Left lung (tissue), 14 donors: ENCODE measurements at regions of chr3 and their contacts with region 1.

Region 1: DNA sequence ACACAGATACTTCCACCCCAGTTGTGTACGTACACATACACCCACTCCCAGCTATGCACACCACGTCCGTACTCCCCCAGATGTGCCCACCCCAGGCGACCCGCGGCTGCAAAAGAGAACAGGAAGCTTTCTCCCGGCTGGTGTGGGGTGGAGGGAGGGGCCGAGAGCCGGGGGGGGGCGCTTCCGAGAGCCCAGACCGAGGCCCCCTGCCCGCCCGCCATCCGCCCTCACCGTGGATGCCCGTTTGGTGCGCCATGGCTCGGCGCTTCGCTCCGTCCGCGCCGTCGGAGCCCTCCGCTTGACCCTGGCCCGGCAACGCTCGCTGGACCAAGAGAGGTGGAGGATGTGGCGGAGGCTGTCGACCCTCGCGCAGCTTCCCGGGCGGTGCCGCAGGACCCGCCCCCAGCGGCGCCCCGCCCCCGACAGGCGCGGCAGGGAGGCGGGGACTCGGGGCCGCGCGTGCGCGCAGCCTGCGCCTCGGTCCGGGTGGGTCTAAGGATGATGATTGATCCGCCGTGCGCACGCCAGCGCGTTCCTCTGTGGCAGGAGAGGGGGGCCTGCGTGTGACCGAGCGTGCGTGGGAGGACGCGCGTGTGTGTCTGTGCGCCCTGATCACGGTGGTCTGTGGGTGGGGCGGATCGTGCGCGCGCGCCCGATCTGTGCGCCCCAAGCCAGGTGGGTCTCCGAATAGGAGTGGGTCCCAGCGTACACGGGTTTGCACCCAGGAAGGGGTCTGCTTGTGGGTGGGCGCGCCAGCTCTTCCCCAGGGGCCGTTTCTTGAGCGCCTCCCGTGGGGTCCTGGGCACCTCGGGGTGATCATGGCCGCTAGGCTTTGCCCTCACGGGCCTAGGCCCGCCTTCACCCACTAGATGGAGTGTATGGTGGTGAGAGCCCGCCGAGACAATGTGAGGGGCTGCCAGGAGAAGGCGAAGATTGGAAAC is at the start of gene TWF2:
- DNase-seq: peak; percentile 82 to 94 (median 86)
- ATAC-seq: peak; percentile 92
- H3K4me3 ChIP-seq: peak within 1 kb of the TSS; percentile 92 to 94
- H3K27ac ChIP-seq: peak within 1 kb of the TSS; percentile 87 to 90
- H3K4me1 ChIP-seq: peaks cover 29 to 74% of the 10 kb centered on the region in 2 donors
- H3K27me3 ChIP-seq: no peaks in the 10 kb centered on the region
- CTCF ChIP-seq: peak; percentile 27 to 35
- polyA plus RNA-seq, gene TWF2: 28.9 to 37.7 (median 30.9) TPM

Region 2: DNA sequence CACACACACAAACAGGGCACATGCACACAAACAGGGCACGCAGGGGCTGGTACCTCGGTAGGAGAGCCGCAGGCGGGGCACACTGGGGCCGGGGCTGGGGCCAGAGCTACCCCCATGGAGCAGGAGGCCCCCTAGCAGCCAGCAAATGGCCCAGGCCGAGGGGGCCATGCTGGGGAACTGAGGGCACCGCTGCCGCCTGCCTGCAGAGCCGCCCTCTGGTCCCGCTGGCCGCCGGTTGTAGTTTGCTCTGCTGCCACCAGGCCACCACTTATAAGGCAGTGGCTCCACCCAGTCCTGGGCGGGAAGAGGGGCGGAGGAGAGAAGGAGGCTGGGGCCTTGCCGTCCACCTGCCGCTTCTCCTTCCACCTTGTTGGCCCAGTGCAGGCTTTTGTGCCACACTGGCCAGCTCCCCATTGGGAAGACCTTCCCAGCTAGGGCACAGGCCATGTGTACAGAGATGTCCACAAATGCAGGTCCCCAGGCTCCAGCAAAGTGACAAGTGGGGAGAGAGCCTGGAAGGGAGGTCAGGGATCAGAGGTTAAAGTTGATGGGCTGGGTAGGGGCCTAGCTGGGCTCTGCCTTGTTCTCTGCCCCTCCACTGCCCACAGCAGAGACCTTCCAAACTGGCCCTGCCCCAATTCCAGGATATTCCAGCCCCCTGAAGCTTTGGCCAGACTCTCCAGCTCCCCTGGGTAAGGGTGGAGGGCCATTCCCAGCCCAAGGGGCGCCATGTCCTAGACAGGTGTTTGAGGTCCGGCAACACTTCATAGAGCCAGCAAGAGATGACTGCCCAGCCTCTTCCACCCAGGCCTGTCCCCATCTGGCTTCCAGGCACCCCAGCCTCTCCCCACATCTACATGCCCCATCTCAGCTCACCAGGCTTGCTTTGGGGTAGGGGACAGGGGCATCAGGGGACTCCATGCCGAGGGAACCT is 206.1 kb after region 1 on chr3 and contains the start of gene SEMA3G:
- intact Hi-C with region 1: loop called in 1 of 2 experiments (anchors 10 kb)
- DNase-seq: peak in 3 of 4 donors; percentile 57 to 93 (median 79)
- ATAC-seq: peak; percentile 87
- H3K4me3 ChIP-seq: peak within 1 kb of the TSS; percentile 5 to 36
- H3K27ac ChIP-seq: no peak within 1 kb of the TSS
- H3K4me1 ChIP-seq: peaks cover 0 to 26% of the 10 kb centered on the region in 2 donors
- H3K27me3 ChIP-seq: no peaks in the 10 kb centered on the region
- CTCF ChIP-seq: peak; percentile 55 to 89
- polyA plus RNA-seq, gene SEMA3G: 5.7 to 8.0 (median 6.1) TPM